Naive thymus-derived CD4-positive, alpha-beta T cell (primary cell): ENCODE measurements at regions of chr13 and their contacts with region 1.

Region 1: DNA sequence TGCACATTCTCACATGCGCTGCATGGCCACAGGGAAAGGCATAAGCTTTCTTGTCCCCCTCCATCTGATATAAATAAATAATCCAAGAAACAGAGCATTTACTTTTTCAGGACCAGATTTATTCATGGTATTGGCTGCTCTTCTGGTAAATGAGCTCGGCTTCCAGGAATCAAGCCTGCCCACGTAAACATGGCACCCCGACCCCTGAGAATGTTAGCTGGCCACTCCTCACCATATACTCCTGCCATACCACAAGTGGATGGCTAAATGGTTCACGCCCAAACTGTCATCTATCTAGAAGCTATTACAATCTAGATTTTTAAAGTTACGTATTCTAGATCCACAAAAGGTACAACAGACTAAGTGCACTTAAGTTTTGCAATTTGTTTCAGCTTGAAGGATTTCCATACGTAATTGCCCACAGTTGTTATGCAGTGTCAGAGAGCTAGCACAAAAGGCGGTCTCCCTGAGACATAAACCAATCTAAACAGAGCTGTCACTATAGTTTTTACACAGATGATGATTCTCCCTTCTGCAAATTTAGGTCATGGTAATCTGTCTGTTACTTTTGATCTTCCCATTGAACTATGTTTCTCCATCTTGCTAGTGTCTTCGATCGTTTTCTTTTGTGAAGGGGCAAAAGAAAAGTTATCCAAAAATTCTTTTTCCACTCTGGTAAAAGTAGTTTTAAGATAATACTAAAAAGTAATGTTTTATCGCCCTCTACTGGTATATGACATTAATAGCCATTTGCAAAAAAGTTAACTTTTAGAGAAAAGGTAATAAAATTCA is 16.2 kb upstream of the FOXO1 start:
- DNase-seq: peak in 6 of 9 donors; percentile 32 to 60 (median 52)
- ATAC-seq: peak; percentile 52
- H3K4me3 ChIP-seq: no peak overlapping the region
- H3K4me3 Mint-ChIP-seq: peak overlapping the region in 5 of 10 donors; percentile 2 to 45 (median 18)
- H3K27ac ChIP-seq: no peak overlapping the region
- H3K27ac Mint-ChIP-seq: peak overlapping the region in 2 of 9 donors; percentile 37 to 45
- H3K4me1 ChIP-seq: peaks cover 0 to 6% of the 10 kb centered on the region in 2 donors
- H3K4me1 Mint-ChIP-seq: peaks cover 8 to 17% (median 14%) of the 10 kb centered on the region in 7 donors
- H3K27me3 ChIP-seq: no peaks in the 10 kb centered on the region
- H3K27me3 Mint-ChIP-seq: no peaks in the 10 kb centered on the region

Region 2: GRCh38 chr13:39684531-39685137 is 998.0 kb before region 1 on chr13:
- CTCF ChIA-PET with region 1: interaction called, 37 read pairs
- POLR2A ChIA-PET with region 1: no interaction called
- intact Hi-C with region 1: loop called (anchors 1 kb)
- DNase-seq: peak in 6 of 9 donors; percentile 6 to 44 (median 34)
- ATAC-seq: peak; percentile 53
- H3K4me3 ChIP-seq: no peak overlapping the region
- H3K4me3 Mint-ChIP-seq: no peak overlapping the region
- H3K27ac ChIP-seq: no peak overlapping the region
- H3K27ac Mint-ChIP-seq: no peak overlapping the region
- H3K4me1 ChIP-seq: no peaks in the 10 kb centered on the region
- H3K4me1 Mint-ChIP-seq: peaks cover 0 to 20% (median 3%) of the 10 kb centered on the region in 7 donors
- H3K27me3 ChIP-seq: no peaks in the 10 kb centered on the region
- H3K27me3 Mint-ChIP-seq: no peaks in the 10 kb centered on the region

Region 3: GRCh38 chr13:39783050-39783449 is 899.6 kb before region 1 on chr13:
- CTCF ChIA-PET with region 1: interaction called, 31 read pairs
- POLR2A ChIA-PET with region 1: interaction called, 3 read pairs
- intact Hi-C with region 1: loop called in 1 of 2 experiments (anchors 2 kb)
- DNase-seq: peak in 1 of 9 donors; percentile 7
- ATAC-seq: no peak
- H3K4me3 ChIP-seq: no peak overlapping the region
- H3K4me3 Mint-ChIP-seq: no peak overlapping the region
- H3K27ac ChIP-seq: no peak overlapping the region
- H3K27ac Mint-ChIP-seq: peak overlapping the region in 1 of 9 donors; percentile 62
- H3K4me1 ChIP-seq: peaks cover 0 to 20% of the 10 kb centered on the region in 2 donors
- H3K4me1 Mint-ChIP-seq: peaks cover 10 to 28% (median 24%) of the 10 kb centered on the region in 7 donors
- H3K27me3 ChIP-seq: no peaks in the 10 kb centered on the region
- H3K27me3 Mint-ChIP-seq: no peaks in the 10 kb centered on the region

Region 4: GRCh38 chr13:40863723-40864122 is 181.1 kb after region 1 on chr13:
- CTCF ChIA-PET with region 1: no interaction called
- POLR2A ChIA-PET with region 1: no interaction called
- intact Hi-C with region 1: no loop called
- DNase-seq: no peak
- ATAC-seq: no peak
- H3K4me3 ChIP-seq: no peak overlapping the region
- H3K4me3 Mint-ChIP-seq: no peak overlapping the region
- H3K27ac ChIP-seq: no peak overlapping the region
- H3K27ac Mint-ChIP-seq: no peak overlapping the region
- H3K4me1 ChIP-seq: no peaks in the 10 kb centered on the region
- H3K4me1 Mint-ChIP-seq: no peaks in the 10 kb centered on the region
- H3K27me3 ChIP-seq: no peaks in the 10 kb centered on the region
- H3K27me3 Mint-ChIP-seq: peaks cover 0 to 2% (median 0%) of the 10 kb centered on the region in 5 donors

Region 5: GRCh38 chr13:42129033-42129432 is 1446.4 kb after region 1 on chr13:
- CTCF ChIA-PET with region 1: no interaction called
- POLR2A ChIA-PET with region 1: no interaction called
- intact Hi-C with region 1: no loop called
- DNase-seq: no peak
- ATAC-seq: no peak
- H3K4me3 ChIP-seq: no peak overlapping the region
- H3K4me3 Mint-ChIP-seq: no peak overlapping the region
- H3K27ac ChIP-seq: no peak overlapping the region
- H3K27ac Mint-ChIP-seq: no peak overlapping the region
- H3K4me1 ChIP-seq: no peaks in the 10 kb centered on the region
- H3K4me1 Mint-ChIP-seq: peaks cover 0 to 6% (median 0%) of the 10 kb centered on the region in 7 donors
- H3K27me3 ChIP-seq: no peaks in the 10 kb centered on the region
- H3K27me3 Mint-ChIP-seq: no peaks in the 10 kb centered on the region